ENCODE measurements at regions of chr2 and their contacts with region 1.

Region 1: GRCh38 chr2:231612179-231613053 is 19.8 kb downstream of the TEX44 start:
- DNase-seq: peak; percentile 92
- ATAC-seq: peak; percentile 50
- H3K4me3 Mint-ChIP-seq: peak overlapping the region; percentile 85
- H3K27ac Mint-ChIP-seq: peak overlapping the region; percentile 96
- H3K4me1 Mint-ChIP-seq: peaks cover 47% of the 10 kb centered on the region
- H3K27me3 Mint-ChIP-seq: no peaks in the 10 kb centered on the region
- CTCF ChIP-seq: peak; percentile 82

Region 2: GRCh38 chr2:231399853-231400680 is 212.3 kb before region 1 on chr2:
- CTCF ChIA-PET with region 1: no interaction called
- POLR2A ChIA-PET with region 1: no interaction called
- intact Hi-C with region 1: no loop called
- DNase-seq: no peak
- ATAC-seq: no peak
- H3K4me3 Mint-ChIP-seq: no peak overlapping the region
- H3K27ac Mint-ChIP-seq: no peak overlapping the region
- H3K4me1 Mint-ChIP-seq: peaks cover 27% of the 10 kb centered on the region
- H3K27me3 Mint-ChIP-seq: no peaks in the 10 kb centered on the region
- CTCF ChIP-seq: no peak

Region 3: DNA sequence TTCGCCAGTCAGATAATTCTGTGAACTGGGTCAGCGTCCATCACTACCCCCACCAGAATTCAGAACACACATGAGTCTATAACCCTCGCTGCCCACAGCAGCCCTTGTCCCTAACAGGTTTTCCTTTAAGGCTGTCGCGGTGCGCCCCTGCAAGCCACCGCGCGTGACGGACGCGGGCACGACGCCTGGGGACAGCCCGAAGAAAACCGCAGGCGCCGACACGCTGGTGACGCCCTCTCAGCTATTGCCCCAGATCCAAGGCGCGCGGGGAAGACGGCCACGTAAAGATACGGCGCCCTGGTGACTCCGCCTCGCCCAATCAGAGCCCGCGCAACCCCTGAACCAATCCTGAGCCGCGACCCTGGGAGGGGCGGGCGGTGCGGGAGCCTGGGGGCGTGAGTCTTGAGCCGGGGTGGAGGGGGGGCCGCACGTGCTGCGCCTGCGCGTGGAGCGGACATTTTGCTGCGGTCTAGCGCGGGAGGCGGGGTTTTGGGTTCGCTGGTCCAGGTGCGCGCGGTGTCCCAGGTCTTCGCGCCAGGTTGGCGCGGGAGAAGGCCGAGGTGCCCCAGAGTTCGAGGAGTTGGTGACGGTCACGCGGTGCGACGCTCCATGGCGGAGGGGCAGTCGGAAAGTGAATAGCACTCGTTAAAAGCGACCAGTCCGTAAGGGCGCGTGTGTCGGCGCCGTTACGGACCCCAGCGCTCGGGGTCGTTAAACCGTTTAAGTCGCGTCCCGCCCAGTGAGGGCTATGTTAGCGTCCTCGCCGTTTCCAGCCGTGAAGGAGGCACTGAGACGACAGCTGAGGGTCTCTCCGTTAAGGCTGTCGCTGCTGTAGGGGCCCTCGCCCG is 98.1 kb before region 1 on chr2:
- CTCF ChIA-PET with region 1: no interaction called
- POLR2A ChIA-PET with region 1: interaction called, 13 read pairs
- intact Hi-C with region 1: no loop called
- DNase-seq: peak; percentile 97
- ATAC-seq: peak; percentile 99
- H3K4me3 Mint-ChIP-seq: peak overlapping the region; percentile 92
- H3K27ac Mint-ChIP-seq: peak overlapping the region; percentile 96
- H3K4me1 Mint-ChIP-seq: peaks cover 13% of the 10 kb centered on the region
- H3K27me3 Mint-ChIP-seq: no peaks in the 10 kb centered on the region
- CTCF ChIP-seq: no peak

Region 4: GRCh38 chr2:231655488-231655887 is 43.1 kb after region 1 on chr2:
- CTCF ChIA-PET with region 1: interaction called, 4 read pairs
- POLR2A ChIA-PET with region 1: interaction called, 1,242 read pairs
- intact Hi-C with region 1: no loop called
- DNase-seq: no peak
- ATAC-seq: no peak
- H3K4me3 Mint-ChIP-seq: no peak overlapping the region
- H3K27ac Mint-ChIP-seq: no peak overlapping the region
- H3K4me1 Mint-ChIP-seq: peaks cover 5% of the 10 kb centered on the region
- H3K27me3 Mint-ChIP-seq: no peaks in the 10 kb centered on the region
- CTCF ChIP-seq: no peak

Region 5: DNA sequence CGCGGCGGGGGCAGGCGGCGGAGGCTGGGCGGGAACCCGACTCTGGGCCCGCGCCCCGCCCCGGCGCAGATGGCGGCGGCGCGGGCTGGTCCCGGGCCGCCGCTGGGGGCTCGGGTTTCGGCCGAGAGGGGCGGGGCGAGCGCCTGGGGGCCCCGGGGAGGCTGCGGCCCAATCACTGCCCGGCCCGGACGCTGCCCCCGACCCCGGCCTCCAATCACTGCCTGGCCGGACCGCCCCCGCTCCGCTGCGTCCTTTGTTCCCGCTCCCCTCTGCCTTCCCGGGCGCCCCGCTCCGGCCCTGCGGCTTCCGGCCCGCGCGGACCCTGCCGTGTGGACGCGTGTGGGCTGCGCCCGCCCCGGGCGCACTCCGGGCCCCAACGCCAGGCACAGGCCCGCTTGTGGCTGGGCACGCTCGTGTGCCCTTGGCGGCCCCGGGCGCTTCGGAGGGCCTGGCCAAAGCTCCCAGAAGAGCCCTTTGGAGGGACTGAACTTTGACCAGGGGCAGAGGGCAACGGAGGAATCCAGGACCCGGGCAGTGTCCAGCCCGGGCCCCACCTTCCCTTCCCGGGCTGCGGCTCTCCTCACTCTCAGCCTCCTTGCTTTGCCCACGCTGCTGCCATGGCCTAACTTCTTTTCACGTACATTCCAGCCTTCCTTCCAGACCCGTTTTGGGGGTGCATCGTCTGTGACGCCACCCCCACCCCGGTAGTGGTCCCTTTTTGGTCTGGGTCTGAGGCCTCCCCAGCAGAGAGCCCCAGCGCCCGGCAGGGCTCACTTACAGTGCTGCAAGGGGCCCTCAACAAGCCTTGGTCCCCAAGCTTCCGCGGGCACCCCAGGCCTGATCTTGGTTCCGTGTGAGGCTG is 68.8 kb after region 1 on chr2:
- CTCF ChIA-PET with region 1: interaction called, 269 read pairs
- POLR2A ChIA-PET with region 1: interaction called, 1,242 read pairs
- intact Hi-C with region 1: no loop called
- DNase-seq: peak; percentile 67
- ATAC-seq: peak; percentile 64
- H3K4me3 Mint-ChIP-seq: peak overlapping the region; percentile 84
- H3K27ac Mint-ChIP-seq: peak overlapping the region; percentile 79
- H3K4me1 Mint-ChIP-seq: peaks cover 58% of the 10 kb centered on the region
- H3K27me3 Mint-ChIP-seq: no peaks in the 10 kb centered on the region
- CTCF ChIP-seq: no peak

Region 6: GRCh38 chr2:231713730-231714430 is 101.5 kb after region 1 on chr2:
- CTCF ChIA-PET with region 1: interaction called, 118 read pairs
- POLR2A ChIA-PET with region 1: interaction called, 315 read pairs
- intact Hi-C with region 1: loop called (anchors 1 kb)
- DNase-seq: peak; percentile 82
- ATAC-seq: peak; percentile 15
- H3K4me3 Mint-ChIP-seq: peak overlapping the region; percentile 55
- H3K27ac Mint-ChIP-seq: peak overlapping the region; percentile 91
- H3K4me1 Mint-ChIP-seq: peaks cover 70% of the 10 kb centered on the region
- H3K27me3 Mint-ChIP-seq: no peaks in the 10 kb centered on the region
- CTCF ChIP-seq: no peak

Region 7: GRCh38 chr2:231900972-231901371 is 288.6 kb after region 1 on chr2:
- CTCF ChIA-PET with region 1: no interaction called
- POLR2A ChIA-PET with region 1: no interaction called
- intact Hi-C with region 1: loop called (anchors 1 kb)
- DNase-seq: no peak
- ATAC-seq: no peak
- H3K4me3 Mint-ChIP-seq: no peak overlapping the region
- H3K27ac Mint-ChIP-seq: no peak overlapping the region
- H3K4me1 Mint-ChIP-seq: no peaks in the 10 kb centered on the region
- H3K27me3 Mint-ChIP-seq: no peaks in the 10 kb centered on the region
- CTCF ChIP-seq: no peak